Activated T-helper 2 cell treated with anti-CD3 and anti-CD28 coated beads, Interferon-gamma antibody, Interleukin-2, Interleukin-4, amounts not matched to agents 10 μg/mL and 5 μg/mL and 100 μg/mL, durations not matched to agents 14 hours and 24 hours and 36 hours (primary cell): ENCODE measurements at regions of chr13 and their contacts with region 1.

Region 1: GRCh38 chr13:45340926-45341750 is at the start of gene TPT1:
- DNase-seq: peak; percentile 99
- H3K4me3 Mint-ChIP-seq: peak within 1 kb of the TSS; percentile 99
- H3K27ac Mint-ChIP-seq: peak within 1 kb of the TSS; percentile 99
- H3K4me1 Mint-ChIP-seq: peaks cover 41% of the 10 kb centered on the region
- H3K27me3 Mint-ChIP-seq: no peaks in the 10 kb centered on the region
- total RNA-seq, gene TPT1: 2,606 and 2,653 TPM in 2 replicates

Region 2: GRCh38 chr13:45310341-45311125 is 30.6 kb before region 1 on chr13:
- intact Hi-C with region 1: loop called (anchors 2 kb)
- DNase-seq: no peak
- H3K4me3 Mint-ChIP-seq: peak overlapping the region; percentile 78
- H3K27ac Mint-ChIP-seq: peak overlapping the region; percentile 0
- H3K4me1 Mint-ChIP-seq: peaks cover 16% of the 10 kb centered on the region
- H3K27me3 Mint-ChIP-seq: peaks cover 22% of the 10 kb centered on the region

Region 3: GRCh38 chr13:45393941-45394570 is 52.9 kb after region 1 on chr13:
- intact Hi-C with region 1: loop called (anchors 1 kb)
- DNase-seq: no peak
- H3K4me3 Mint-ChIP-seq: no peak overlapping the region
- H3K27ac Mint-ChIP-seq: no peak overlapping the region
- H3K4me1 Mint-ChIP-seq: peaks cover 36% of the 10 kb centered on the region
- H3K27me3 Mint-ChIP-seq: no peaks in the 10 kb centered on the region

Region 4: GRCh38 chr13:45464687-45465453 is 123.7 kb after region 1 on chr13 and contains the start of gene COG3:
- intact Hi-C with region 1: loop called (anchors 1 kb)
- DNase-seq: peak; percentile 94
- H3K4me3 Mint-ChIP-seq: peak within 1 kb of the TSS; percentile 91
- H3K27ac Mint-ChIP-seq: peak within 1 kb of the TSS; percentile 83
- H3K4me1 Mint-ChIP-seq: peaks cover 28% of the 10 kb centered on the region
- H3K27me3 Mint-ChIP-seq: peaks cover 3% of the 10 kb centered on the region
- total RNA-seq, gene COG3: 21.3 and 22.5 TPM in 2 replicates